Heart right ventricle (tissue), 16 donors: ENCODE measurements at regions of chr15 and their contacts with region 1.

Region 1: GRCh38 chr15:68672781-68673205 is 94.0 kb downstream of the CORO2B start:
- DNase-seq: no peak
- ATAC-seq: peak in 1 of 8 donors; percentile 29
- H3K4me3 ChIP-seq: no peak overlapping the region
- H3K27ac ChIP-seq: no peak overlapping the region
- H3K4me1 ChIP-seq: peaks cover 4 to 28% (median 23%) of the 10 kb centered on the region in 9 donors
- H3K27me3 ChIP-seq: no peaks in the 10 kb centered on the region
- CTCF ChIP-seq: peak in 5 of 9 donors; percentile 11 to 32 (median 24)

Region 2: GRCh38 chr15:68749793-68750192 is 77.0 kb after region 1 on chr15:
- intact Hi-C with region 1: loop called in 1 of 10 experiments (anchors 5 kb)
- DNase-seq: no peak
- ATAC-seq: peak in 7 of 8 donors; percentile 33 to 86 (median 78)
- H3K4me3 ChIP-seq: no peak overlapping the region
- H3K27ac ChIP-seq: peak overlapping the region in 1 of 10 donors; percentile 28
- H3K4me1 ChIP-seq: peaks cover 0 to 5% (median 0%) of the 10 kb centered on the region in 9 donors
- H3K27me3 ChIP-seq: no peaks in the 10 kb centered on the region
- CTCF ChIP-seq: no peak